ENCODE measurements at regions of chr1 and their contacts with region 1.

Region 1: GRCh38 chr1:150332651-150333290 is 11.4 kb downstream of the PRPF3 start:
- DNase-seq: no peak
- ATAC-seq: no peak; a peak in 1 of 6 replicates
- H3K4me3 ChIP-seq: no peak overlapping the region
- H3K27ac ChIP-seq: no peak overlapping the region
- H3K4me1 ChIP-seq: no peaks in the 10 kb centered on the region
- CTCF ChIP-seq: no peak
- EP300 ChIP-seq: no peak
- POLR2A ChIP-seq: no peak
- RAD21 ChIP-seq: no peak

Region 2: DNA sequence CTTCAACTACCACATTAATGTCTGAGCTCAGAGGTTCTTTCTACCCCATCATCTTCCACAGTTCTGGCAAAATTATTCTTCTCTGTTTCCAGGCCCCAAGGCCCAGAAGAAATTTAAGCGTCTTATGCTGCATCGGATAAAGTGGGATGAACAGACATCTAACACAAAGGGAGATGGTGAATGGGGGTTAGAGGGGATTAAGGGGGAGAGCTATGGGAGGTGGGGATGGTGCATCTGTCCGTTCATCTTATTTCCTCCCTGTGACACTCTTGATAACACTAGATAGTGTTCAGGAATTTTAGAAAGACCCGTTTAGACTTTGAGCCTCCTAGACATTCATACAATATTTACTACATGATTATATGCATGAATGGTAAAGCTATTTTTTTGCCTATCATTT is 13.5 kb after region 1 on chr1:
- CTCF ChIA-PET with region 1: interaction called, 4 read pairs
- POLR2A ChIA-PET with region 1: interaction called, 10 read pairs
- DNase-seq: no peak
- ATAC-seq: no peak
- H3K4me3 ChIP-seq: no peak overlapping the region
- H3K27ac ChIP-seq: no peak overlapping the region
- H3K4me1 ChIP-seq: no peaks in the 10 kb centered on the region
- CTCF ChIP-seq: no peak
- EP300 ChIP-seq: no peak
- POLR2A ChIP-seq: no peak
- RAD21 ChIP-seq: no peak